Activated CD8-positive, alpha-beta memory T cell treated with anti-CD3 and anti-CD28 coated beads, Interleukin-2, amount 10 ng/mL, durations not matched to agents 7 days and 5 days (primary cell): ENCODE measurements at regions of chr12 and their contacts with region 1.

Region 1: DNA sequence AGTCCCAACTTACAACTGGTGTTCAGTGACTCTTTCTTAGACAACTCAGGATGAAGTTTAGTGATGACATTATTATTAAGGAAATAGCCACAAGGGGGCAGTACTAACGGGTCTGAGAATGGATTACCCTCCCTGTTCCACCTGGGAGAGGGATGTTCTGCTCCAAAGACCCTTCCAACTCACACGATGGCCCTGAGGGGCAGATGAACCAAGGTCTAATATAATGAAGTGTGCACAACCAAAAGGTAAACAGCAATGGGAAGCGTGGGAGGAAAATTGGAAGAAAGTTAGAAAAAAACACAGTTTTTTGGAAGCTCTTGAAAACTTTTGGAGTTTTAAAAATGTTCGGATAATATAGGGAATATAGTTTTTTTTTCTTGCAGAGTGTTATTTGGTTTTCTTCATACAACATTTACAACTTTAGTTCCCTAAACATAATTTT is 24.0 kb downstream of the FGF6 start:
- DNase-seq: no peak
- ATAC-seq: peak; percentile 66
- H3K4me3 Mint-ChIP-seq: no peak overlapping the region
- H3K27ac Mint-ChIP-seq: no peak overlapping the region
- H3K4me1 Mint-ChIP-seq: no peaks in the 10 kb centered on the region
- H3K27me3 Mint-ChIP-seq: peaks cover 18% of the 10 kb centered on the region

Region 2: GRCh38 chr12:4526923-4527546 is 105.4 kb after region 1 on chr12:
- CTCF ChIA-PET with region 1: interaction called, 13 read pairs
- DNase-seq: no peak
- ATAC-seq: no peak
- H3K4me3 Mint-ChIP-seq: no peak overlapping the region
- H3K27ac Mint-ChIP-seq: no peak overlapping the region
- H3K4me1 Mint-ChIP-seq: no peaks in the 10 kb centered on the region
- H3K27me3 Mint-ChIP-seq: no peaks in the 10 kb centered on the region